Posterior vena cava (tissue), 2 donors: ENCODE measurements at regions of chr12 and their contacts with region 1.

Region 1: DNA sequence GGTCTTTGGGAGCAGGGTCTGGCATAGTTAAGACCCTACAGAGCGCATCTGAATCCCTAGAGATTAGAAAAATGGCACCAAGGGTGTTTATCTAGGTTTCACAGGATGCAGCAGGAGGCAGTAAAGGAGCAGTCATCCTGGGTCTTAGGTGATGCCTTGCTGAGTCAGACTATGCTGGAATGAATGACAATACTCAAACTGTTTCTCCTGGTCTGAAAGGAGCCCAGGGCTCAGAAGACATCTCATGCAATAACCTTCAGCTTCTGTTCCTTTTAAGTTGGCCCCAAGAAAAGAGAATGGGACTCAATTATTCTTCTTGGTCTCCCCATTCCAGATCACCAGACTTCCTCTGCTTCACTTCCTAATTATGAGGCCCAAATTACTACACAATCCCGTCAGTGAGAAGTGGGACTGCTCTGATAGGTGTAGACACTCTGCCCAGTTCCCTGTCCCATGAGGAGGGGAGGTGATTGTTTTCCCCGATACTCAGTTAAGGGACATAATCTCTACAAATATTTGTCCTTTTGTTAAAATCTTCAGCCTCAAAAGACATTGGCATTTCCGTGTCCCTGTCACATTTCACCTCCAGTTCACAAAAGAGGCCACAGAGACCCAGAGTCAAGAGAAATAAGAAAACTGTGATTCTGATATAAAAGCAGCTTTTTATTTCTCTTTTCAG is 14.8 kb upstream of the APOF start:
- DNase-seq: no peak

Region 2: DNA sequence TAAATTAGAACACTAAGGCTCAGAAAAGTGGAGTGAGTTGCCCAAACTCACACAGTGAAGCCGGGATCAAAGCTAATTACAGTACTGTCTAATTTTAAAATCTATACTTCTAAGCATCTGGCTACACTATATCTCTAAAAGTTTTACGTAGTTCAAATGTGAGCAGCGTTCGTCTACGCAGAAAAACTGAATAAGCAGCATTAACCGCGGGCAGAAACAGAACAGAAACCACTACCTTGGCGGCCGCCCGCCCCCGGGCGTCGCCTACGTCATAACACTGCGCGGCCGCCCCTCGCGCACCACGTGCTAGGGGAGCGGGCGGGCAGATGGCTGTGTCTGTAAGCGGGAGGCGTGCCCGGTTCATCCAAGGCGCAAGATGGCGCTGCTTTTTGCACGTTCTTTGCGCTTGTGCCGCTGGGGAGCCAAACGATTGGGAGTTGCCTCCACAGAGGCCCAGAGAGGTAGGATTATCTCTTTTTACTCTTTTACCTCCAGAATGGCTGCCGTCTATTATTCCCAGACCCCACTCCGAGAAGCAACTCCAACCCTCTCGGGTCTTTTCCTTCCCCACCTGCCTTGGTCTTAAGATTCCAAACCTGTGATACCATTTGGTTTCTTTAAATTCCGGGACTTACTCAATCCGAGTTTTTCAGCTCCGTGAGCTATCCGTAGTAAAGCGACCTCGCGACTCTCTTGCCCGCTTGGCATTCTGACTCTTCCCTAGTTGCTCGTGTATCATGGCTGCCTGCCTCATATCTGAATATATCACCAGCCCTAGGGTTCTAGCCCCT is 91.0 kb after region 1 on chr12 and contains the start of gene SPRYD4:
- intact Hi-C with region 1: loop called in 1 of 2 experiments (anchors 10 kb)
- DNase-seq: peak; percentile 98
- total RNA-seq, gene SPRYD4: 1.7 to 2.3 TPM

Region 3: DNA sequence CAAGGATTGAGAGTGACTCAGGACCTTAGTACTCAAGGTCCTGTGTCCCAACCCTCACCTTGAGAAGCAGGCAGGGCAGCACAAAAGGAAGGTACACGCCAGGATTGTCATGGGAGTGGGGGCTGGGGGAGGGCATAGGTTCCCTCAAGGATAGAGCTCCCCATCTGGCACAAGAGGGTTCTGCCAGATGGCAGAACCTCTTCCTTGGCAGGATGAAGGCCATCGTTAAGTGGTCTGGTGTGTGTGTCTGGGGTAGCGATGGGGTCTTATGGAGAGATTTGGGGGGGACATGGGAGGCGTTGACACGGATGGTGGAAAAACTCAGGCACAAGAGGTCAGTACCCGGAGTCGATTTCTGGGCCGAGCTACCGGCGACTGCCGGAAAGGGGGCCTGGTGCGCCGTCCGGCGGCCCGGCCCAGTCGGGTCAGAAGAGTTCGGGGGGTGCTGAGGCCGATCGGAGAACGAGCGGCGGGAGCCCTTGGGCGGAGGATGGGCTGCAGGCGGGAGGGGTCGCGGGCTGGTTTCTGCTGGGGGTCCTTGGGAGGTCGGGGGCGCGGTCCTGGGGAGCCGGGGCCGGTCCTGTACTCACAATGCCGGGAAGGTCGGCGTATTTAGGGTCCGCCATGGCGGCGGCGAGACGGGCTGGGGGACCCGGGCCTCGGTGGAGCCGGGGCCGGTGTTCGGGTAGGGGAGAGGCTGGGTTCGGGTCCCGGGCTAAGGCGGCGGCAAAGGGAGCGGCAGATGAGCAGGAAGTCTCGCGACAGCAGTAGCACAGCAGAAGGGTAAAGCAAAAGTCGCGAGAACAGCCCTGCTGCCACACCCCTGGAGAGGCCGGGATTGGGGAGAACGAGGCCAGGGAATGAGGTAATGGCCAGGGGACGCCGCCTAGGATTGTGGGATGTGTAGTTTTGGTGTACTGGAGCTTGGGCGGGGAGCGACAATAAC is 1169.3 kb after region 1 on chr12 and contains the start of gene DCTN2:
- intact Hi-C with region 1: no loop called
- DNase-seq: peak; percentile 98
- total RNA-seq, gene DCTN2: 90.6 to 104 TPM